B cell (primary cell): ENCODE measurements at regions of chr10 and their contacts with region 1.

Region 1: GRCh38 chr10:89887830-89888229 is 186.4 kb downstream of the KIF20B start:
- DNase-seq: peak; percentile 83
- ATAC-seq: peak; percentile 73
- H3K4me3 ChIP-seq: peak overlapping the region in 3 of 5 experiments; percentile 6 to 36 (median 33)
- H3K4me3 Mint-ChIP-seq: peak overlapping the region; percentile 82
- H3K27ac ChIP-seq: peak overlapping the region; percentile 94 to 97
- H3K27ac Mint-ChIP-seq: peak overlapping the region; percentile 95
- H3K4me1 ChIP-seq: peaks cover 49 to 52% of the 10 kb centered on the region in 2 donors
- H3K4me1 Mint-ChIP-seq: peaks cover 55% of the 10 kb centered on the region
- H3K27me3 ChIP-seq: no peaks in the 10 kb centered on the region
- H3K27me3 Mint-ChIP-seq: no peaks in the 10 kb centered on the region
- CTCF ChIP-seq: no peak

Region 2: DNA sequence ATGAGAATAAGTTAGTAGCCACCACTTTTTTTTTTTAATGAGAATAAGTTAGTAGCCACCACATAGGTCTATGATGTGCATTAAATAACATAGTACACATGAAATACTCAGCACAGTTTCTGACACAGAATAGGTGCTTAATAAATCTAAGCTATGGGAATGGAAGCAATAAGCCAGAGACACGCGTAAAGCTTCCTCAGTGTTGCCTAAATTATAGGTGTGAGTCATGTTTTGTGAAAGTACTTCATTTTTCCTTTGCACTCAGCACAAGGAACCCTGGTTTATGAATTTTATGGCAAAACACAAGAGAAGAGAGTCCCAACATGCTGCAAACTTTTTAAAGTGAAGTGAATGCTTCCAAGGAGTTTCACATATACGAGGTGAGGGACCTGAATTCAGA is 1572.1 kb before region 1 on chr10:
- CTCF ChIA-PET with region 1: no interaction called
- POLR2A ChIA-PET with region 1: interaction called, 11 read pairs
- intact Hi-C with region 1: no loop called
- DNase-seq: no peak
- ATAC-seq: no peak
- H3K4me3 ChIP-seq: no peak overlapping the region
- H3K4me3 Mint-ChIP-seq: no peak overlapping the region
- H3K27ac ChIP-seq: no peak overlapping the region
- H3K27ac Mint-ChIP-seq: no peak overlapping the region
- H3K4me1 ChIP-seq: peaks cover 16 to 17% of the 10 kb centered on the region in 2 donors
- H3K4me1 Mint-ChIP-seq: peaks cover 37% of the 10 kb centered on the region
- H3K27me3 ChIP-seq: no peaks in the 10 kb centered on the region
- H3K27me3 Mint-ChIP-seq: no peaks in the 10 kb centered on the region
- CTCF ChIP-seq: no peak

Region 3: GRCh38 chr10:89837150-89837888 is 50.5 kb before region 1 on chr10:
- CTCF ChIA-PET with region 1: no interaction called
- POLR2A ChIA-PET with region 1: no interaction called
- intact Hi-C with region 1: loop called (anchors 5 kb)
- DNase-seq: peak; percentile 70
- ATAC-seq: peak; percentile 76
- H3K4me3 ChIP-seq: peak overlapping the region; percentile 42 to 87 (median 75)
- H3K4me3 Mint-ChIP-seq: peak overlapping the region; percentile 84
- H3K27ac ChIP-seq: peak overlapping the region; percentile 56 to 74
- H3K27ac Mint-ChIP-seq: peak overlapping the region; percentile 87
- H3K4me1 ChIP-seq: peaks cover 9 to 18% of the 10 kb centered on the region in 2 donors
- H3K4me1 Mint-ChIP-seq: peaks cover 22% of the 10 kb centered on the region
- H3K27me3 ChIP-seq: no peaks in the 10 kb centered on the region
- H3K27me3 Mint-ChIP-seq: peaks cover 10% of the 10 kb centered on the region
- CTCF ChIP-seq: no peak

Region 4: DNA sequence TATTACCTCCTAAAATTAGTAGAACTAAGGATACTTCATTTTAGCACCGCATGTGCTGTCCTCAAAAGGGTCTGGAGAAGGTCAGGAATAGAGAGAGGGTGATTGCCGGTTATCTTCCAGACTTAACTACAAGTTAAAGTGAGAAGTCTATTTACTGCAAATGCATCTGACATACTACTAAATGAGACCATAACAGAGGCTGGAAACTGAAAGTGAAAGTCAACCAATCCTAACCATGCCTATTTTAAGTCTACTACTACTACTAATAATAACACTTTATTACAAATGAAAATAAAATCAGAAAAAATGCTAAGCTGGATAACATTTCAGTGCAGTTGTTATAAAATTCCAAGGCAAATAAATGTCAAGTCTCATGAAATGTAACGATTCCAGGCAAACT is 58.3 kb after region 1 on chr10:
- CTCF ChIA-PET with region 1: no interaction called
- POLR2A ChIA-PET with region 1: no interaction called
- intact Hi-C with region 1: loop called (anchors 5 kb)
- DNase-seq: peak; percentile 20
- ATAC-seq: no peak
- H3K4me3 ChIP-seq: no peak overlapping the region
- H3K4me3 Mint-ChIP-seq: no peak overlapping the region
- H3K27ac ChIP-seq: no peak overlapping the region
- H3K27ac Mint-ChIP-seq: no peak overlapping the region
- H3K4me1 ChIP-seq: peaks cover 8 to 11% of the 10 kb centered on the region in 2 donors
- H3K4me1 Mint-ChIP-seq: peaks cover 7% of the 10 kb centered on the region
- H3K27me3 ChIP-seq: peaks cover 0 to 9% (median 6%) of the 10 kb centered on the region in 4 experiments
- H3K27me3 Mint-ChIP-seq: peaks cover 35% of the 10 kb centered on the region
- CTCF ChIP-seq: no peak

Region 5: GRCh38 chr10:90871766-90872647 is 984.2 kb after region 1 on chr10 and contains the start of gene RPP30:
- CTCF ChIA-PET with region 1: no interaction called
- POLR2A ChIA-PET with region 1: no interaction called
- intact Hi-C with region 1: loop called (anchors 10 kb)
- DNase-seq: peak; percentile 86
- ATAC-seq: peak; percentile 97
- H3K4me3 ChIP-seq: peak within 1 kb of the TSS; percentile 72 to 96 (median 92)
- H3K4me3 Mint-ChIP-seq: peak within 1 kb of the TSS; percentile 92
- H3K27ac ChIP-seq: peak within 1 kb of the TSS; percentile 51 to 62
- H3K27ac Mint-ChIP-seq: peak within 1 kb of the TSS; percentile 84
- H3K4me1 ChIP-seq: peaks cover 16 to 18% of the 10 kb centered on the region in 2 donors
- H3K4me1 Mint-ChIP-seq: peaks cover 32% of the 10 kb centered on the region
- H3K27me3 ChIP-seq: peaks cover 0 to 13% (median 7%) of the 10 kb centered on the region in 4 experiments
- H3K27me3 Mint-ChIP-seq: peaks cover 27% of the 10 kb centered on the region
- CTCF ChIP-seq: no peak
- total RNA-seq, gene RPP30: 41.7 and 42.3 TPM in 2 replicates